Activated CD4-positive, alpha-beta memory T cell treated with anti-CD3 and anti-CD28 coated beads for 36 hours (primary cell): ENCODE measurements at regions of chr3 and their contacts with region 1.

Region 1: DNA sequence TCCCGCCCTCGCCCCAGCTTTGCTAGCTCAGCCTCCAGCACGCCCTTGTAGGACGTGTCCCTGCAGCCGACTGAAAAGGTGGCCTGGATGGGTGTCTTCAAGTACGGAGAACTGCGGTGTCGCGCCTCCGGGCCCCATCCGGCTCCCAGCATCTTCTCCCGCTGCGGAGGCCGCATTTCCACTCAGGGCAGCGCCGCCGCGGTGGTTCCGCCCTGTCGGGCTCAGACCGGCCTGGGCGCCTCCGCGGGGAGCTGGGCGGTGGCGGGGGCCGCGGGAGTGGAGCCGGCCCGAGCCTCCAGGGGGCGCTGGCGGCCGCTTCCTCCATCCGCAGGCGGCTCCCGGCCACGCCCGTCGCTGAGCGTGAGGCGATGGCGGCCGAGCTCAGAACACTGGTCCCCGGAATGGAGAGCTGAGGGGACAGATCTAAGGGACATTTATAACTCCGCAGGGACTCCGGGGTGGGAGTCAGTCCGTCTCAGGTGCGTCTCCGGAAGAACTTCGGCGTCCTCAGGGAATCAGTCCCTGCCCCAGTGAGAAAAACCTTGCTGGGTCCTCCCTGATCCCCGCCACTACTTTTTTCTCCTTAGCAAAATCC is 13.6 kb upstream of the SMCO1 start:
- DNase-seq: peak; percentile 92
- H3K4me3 Mint-ChIP-seq: peak overlapping the region; percentile 71
- H3K27ac Mint-ChIP-seq: peak overlapping the region; percentile 87
- H3K4me1 Mint-ChIP-seq: peaks cover 13% of the 10 kb centered on the region
- H3K27me3 Mint-ChIP-seq: peaks cover 2% of the 10 kb centered on the region

Region 2: GRCh38 chr3:196274585-196274984 is 254.2 kb before region 1 on chr3:
- CTCF ChIA-PET with region 1: interaction called, 4 read pairs
- POLR2A ChIA-PET with region 1: no interaction called
- intact Hi-C with region 1: loop called (anchors 5 kb)
- DNase-seq: peak; percentile 81
- H3K4me3 Mint-ChIP-seq: peak overlapping the region; percentile 53
- H3K27ac Mint-ChIP-seq: peak overlapping the region; percentile 90
- H3K4me1 Mint-ChIP-seq: peaks cover 67% of the 10 kb centered on the region
- H3K27me3 Mint-ChIP-seq: no peaks in the 10 kb centered on the region

Region 3: GRCh38 chr3:196502775-196503195 is 26.0 kb before region 1 on chr3:
- CTCF ChIA-PET with region 1: interaction called, 6 read pairs
- POLR2A ChIA-PET with region 1: interaction called, 14 read pairs
- intact Hi-C with region 1: loop called (anchors 1 kb)
- DNase-seq: peak; percentile 81
- H3K4me3 Mint-ChIP-seq: peak overlapping the region; percentile 97
- H3K27ac Mint-ChIP-seq: peak overlapping the region; percentile 99
- H3K4me1 Mint-ChIP-seq: peaks cover 36% of the 10 kb centered on the region
- H3K27me3 Mint-ChIP-seq: no peaks in the 10 kb centered on the region

Region 4: GRCh38 chr3:196632046-196632751 is 103.5 kb after region 1 on chr3:
- CTCF ChIA-PET with region 1: interaction called, 4 read pairs
- POLR2A ChIA-PET with region 1: no interaction called
- intact Hi-C with region 1: loop called (anchors 2 kb)
- DNase-seq: peak; percentile 92
- H3K4me3 Mint-ChIP-seq: peak overlapping the region; percentile 80
- H3K27ac Mint-ChIP-seq: peak overlapping the region; percentile 94
- H3K4me1 Mint-ChIP-seq: peaks cover 53% of the 10 kb centered on the region
- H3K27me3 Mint-ChIP-seq: no peaks in the 10 kb centered on the region